ENCODE measurements at regions of chr18 and their contacts with region 1.

Region 1: DNA sequence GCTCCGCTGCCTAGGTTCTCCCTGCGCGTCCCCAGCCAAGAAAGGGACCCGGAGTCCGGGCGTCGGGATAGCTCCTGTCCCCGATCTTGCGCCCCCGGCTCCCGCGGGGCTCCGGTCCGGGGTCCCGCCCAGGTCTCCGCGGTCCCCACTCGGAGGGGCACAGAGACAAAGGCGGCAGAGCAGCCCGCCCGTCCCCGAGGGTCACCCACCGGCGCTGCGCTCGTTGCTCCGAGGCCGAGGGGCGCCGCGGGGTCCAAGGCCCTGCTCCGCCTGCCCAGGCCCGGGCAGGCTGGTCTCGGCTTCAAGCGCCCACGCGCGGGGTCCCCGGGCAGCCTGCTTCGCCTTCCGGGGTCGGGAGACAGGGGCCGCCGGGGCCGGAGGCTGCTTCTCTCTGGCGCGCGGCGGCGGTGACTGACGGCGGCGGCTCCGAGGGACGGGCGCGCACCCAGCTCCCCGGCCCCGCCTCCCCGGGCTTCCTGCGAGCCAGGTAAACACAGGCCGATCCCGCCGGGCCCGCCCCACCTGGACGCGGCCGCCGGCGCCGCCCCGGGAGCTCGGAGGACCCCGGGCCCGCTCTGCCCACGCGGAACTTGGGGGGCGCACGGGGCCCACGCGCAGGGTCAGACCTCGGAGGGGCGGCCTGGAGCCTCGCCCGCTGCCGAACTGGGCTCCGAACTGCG is at the start of gene MBP:
- DNase-seq: peak; percentile 77
- ATAC-seq: peak; percentile 52
- H3K4me3 ChIP-seq: peak within 1 kb of the TSS; percentile 34 to 90 (median 80)
- H3K4me3 Mint-ChIP-seq: peak within 1 kb of the TSS; percentile 96
- H3K27ac ChIP-seq: peak within 1 kb of the TSS; percentile 78 to 88
- H3K27ac Mint-ChIP-seq: peak within 1 kb of the TSS; percentile 93
- H3K4me1 ChIP-seq: peaks cover 45 to 54% of the 10 kb centered on the region in 2 donors
- H3K4me1 Mint-ChIP-seq: peaks cover 54% of the 10 kb centered on the region
- H3K27me3 ChIP-seq: no peaks in the 10 kb centered on the region
- H3K27me3 Mint-ChIP-seq: no peaks in the 10 kb centered on the region
- CTCF ChIP-seq: no peak
- total RNA-seq, gene MBP: 192 and 193 TPM in 2 replicates

Region 2: DNA sequence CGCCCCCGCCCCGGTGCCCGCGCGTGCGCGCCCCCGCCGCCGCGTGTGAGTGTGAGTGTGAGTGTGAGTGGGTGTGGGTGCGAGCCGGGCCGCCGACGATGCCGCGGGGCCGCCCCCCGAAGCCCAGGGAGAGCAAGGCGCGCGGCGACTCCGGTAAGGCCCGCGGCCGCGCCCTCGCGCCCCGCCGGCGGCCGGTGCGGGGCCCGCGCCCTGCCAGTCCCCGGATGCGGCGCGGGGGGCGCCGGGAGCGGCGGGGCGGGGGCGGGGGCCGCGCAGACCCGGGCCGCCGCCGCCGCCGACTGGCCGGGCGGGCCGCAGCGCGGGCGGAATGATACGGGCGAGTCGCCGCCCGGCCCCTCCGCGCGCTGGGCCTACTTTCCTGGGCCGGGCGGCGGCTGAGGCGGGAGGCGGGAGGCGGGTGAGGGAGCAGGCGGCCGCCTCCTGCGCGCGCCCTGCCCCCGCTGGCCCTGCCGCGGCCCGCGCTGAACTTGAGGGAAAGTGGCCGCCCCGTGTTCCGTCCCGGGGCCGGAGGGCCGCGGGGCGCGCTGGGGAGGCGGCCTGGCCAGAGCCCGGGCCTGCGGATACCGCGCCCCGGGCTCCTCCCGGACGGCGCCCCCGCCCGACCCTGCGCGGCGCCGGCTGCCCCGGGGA is 309.9 kb before region 1 on chr18 and contains the start of gene ZNF236:
- CTCF ChIA-PET with region 1: no interaction called
- POLR2A ChIA-PET with region 1: no interaction called
- intact Hi-C with region 1: loop called (anchors 5 kb)
- DNase-seq: peak; percentile 89
- ATAC-seq: peak; percentile 60
- H3K4me3 ChIP-seq: peak within 1 kb of the TSS; percentile 75 to 98 (median 95)
- H3K4me3 Mint-ChIP-seq: peak within 1 kb of the TSS; percentile 95
- H3K27ac ChIP-seq: peak within 1 kb of the TSS; percentile 85 to 90
- H3K27ac Mint-ChIP-seq: peak within 1 kb of the TSS; percentile 97
- H3K4me1 ChIP-seq: peaks cover 19 to 45% of the 10 kb centered on the region in 2 donors
- H3K4me1 Mint-ChIP-seq: peaks cover 60% of the 10 kb centered on the region
- H3K27me3 ChIP-seq: no peaks in the 10 kb centered on the region
- H3K27me3 Mint-ChIP-seq: no peaks in the 10 kb centered on the region
- CTCF ChIP-seq: no peak
- total RNA-seq, gene ZNF236: 39.2 and 39.5 TPM in 2 replicates

Region 3: GRCh38 chr18:76914314-76914713 is 218.2 kb before region 1 on chr18:
- CTCF ChIA-PET with region 1: no interaction called
- POLR2A ChIA-PET with region 1: no interaction called
- intact Hi-C with region 1: no loop called
- DNase-seq: no peak
- ATAC-seq: no peak
- H3K4me3 ChIP-seq: no peak overlapping the region
- H3K4me3 Mint-ChIP-seq: no peak overlapping the region
- H3K27ac ChIP-seq: no peak overlapping the region
- H3K27ac Mint-ChIP-seq: no peak overlapping the region
- H3K4me1 ChIP-seq: no peaks in the 10 kb centered on the region
- H3K4me1 Mint-ChIP-seq: peaks cover 11% of the 10 kb centered on the region
- H3K27me3 ChIP-seq: no peaks in the 10 kb centered on the region
- H3K27me3 Mint-ChIP-seq: no peaks in the 10 kb centered on the region
- CTCF ChIP-seq: no peak

Region 4: DNA sequence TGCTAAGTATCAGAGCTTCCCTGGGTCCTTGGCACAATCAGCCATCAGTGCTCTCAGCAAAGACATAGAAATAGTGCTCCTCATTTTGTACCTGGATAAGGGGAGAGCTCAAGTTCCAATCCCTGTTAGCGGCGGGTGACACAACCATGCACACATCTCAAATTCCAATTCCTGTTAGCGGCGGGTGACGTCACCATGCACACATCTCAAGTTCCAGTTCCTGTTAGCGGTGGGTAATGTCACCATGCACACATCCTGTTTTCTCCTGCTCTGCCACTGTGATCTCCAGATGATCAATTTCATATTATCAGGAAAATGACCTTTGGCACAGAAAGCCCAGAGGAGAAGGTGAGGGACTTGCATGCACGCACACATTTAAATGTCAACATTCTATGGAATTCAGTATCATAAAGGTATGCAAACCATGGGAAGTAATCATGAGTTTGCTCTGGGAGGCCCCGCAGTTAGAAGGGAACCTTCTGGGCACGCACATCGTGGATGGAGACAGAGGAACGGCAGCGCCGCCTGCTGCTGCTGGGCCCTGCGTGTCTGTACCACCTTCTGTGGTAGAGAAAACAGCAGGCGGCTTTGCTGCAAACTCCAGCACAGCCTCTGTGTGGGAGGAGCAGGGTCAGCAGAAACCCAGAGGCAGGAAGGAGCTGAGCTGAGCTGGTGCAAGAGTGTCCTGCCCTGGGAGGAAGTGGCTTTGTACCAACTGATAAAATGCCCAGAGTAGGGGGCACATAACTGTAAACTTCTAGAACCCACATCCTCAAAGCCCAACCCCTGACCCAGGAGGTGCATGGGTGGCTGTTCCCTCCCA is 77.7 kb before region 1 on chr18:
- CTCF ChIA-PET with region 1: interaction called, 16 read pairs
- POLR2A ChIA-PET with region 1: interaction called, 23 read pairs
- intact Hi-C with region 1: loop called (anchors 2 kb)
- DNase-seq: peak; percentile 91
- ATAC-seq: peak; percentile 69
- H3K4me3 ChIP-seq: peak overlapping the region; percentile 32 to 41 (median 38)
- H3K4me3 Mint-ChIP-seq: peak overlapping the region; percentile 89
- H3K27ac ChIP-seq: peak overlapping the region; percentile 92 to 96
- H3K27ac Mint-ChIP-seq: peak overlapping the region; percentile 96
- H3K4me1 ChIP-seq: peaks cover 56 to 61% of the 10 kb centered on the region in 2 donors
- H3K4me1 Mint-ChIP-seq: peaks cover 68% of the 10 kb centered on the region
- H3K27me3 ChIP-seq: no peaks in the 10 kb centered on the region
- H3K27me3 Mint-ChIP-seq: no peaks in the 10 kb centered on the region
- CTCF ChIP-seq: peak; percentile 64

Region 5: GRCh38 chr18:77079954-77080682 is 52.4 kb before region 1 on chr18:
- CTCF ChIA-PET with region 1: no interaction called
- POLR2A ChIA-PET with region 1: interaction called, 4 read pairs
- intact Hi-C with region 1: loop called (anchors 2 kb)
- DNase-seq: peak; percentile 91
- ATAC-seq: peak; percentile 98
- H3K4me3 ChIP-seq: peak overlapping the region in 1 of 5 experiments; percentile 38
- H3K4me3 Mint-ChIP-seq: peak overlapping the region; percentile 70
- H3K27ac ChIP-seq: peak overlapping the region in 1 of 2 donors; percentile 87
- H3K27ac Mint-ChIP-seq: peak overlapping the region; percentile 94
- H3K4me1 ChIP-seq: peaks cover 18 to 27% of the 10 kb centered on the region in 2 donors
- H3K4me1 Mint-ChIP-seq: peaks cover 66% of the 10 kb centered on the region
- H3K27me3 ChIP-seq: no peaks in the 10 kb centered on the region
- H3K27me3 Mint-ChIP-seq: no peaks in the 10 kb centered on the region
- CTCF ChIP-seq: no peak

Region 6: DNA sequence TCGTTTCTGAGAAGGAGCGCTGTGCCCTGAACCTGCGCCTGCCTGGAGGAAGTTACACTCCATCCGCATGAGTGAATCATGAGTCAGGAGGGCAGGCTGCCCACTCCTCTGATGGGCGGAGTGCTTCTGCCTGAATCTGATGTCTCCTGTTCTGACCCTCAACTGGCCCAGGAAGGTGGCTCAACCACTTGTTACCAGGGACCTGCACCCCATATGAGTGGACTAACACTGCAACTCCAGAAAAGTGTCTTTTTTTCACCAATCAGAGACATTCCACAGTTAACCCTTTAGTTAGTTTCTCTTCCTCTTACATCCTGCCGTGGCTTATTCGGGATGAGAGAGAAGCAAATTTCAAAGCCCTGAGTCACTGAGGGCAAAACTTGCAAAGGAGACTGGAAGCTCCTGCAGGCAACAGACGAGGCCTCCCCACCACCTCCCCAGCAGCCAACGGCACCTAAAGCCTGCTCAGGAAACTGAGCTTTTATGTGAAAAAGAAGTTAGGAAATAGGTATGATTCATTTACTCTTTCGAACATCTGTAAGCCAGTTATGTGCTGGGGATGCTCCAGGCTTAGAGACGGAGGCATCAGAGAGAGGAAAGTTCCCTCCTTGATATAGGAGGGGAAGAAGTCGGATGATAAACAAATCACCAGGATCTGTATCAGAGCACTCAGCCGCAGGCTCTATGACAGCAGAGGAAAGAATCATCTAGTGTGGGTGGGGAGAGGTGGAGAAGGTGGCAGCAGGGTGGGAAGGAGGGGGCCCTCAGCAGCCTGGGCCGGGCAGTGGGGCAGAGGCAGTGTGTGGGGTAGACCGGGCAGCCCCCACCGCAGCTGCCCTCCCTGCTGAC is 30.9 kb before region 1 on chr18:
- CTCF ChIA-PET with region 1: interaction called, 5 read pairs
- POLR2A ChIA-PET with region 1: interaction called, 6 read pairs
- intact Hi-C with region 1: loop called (anchors 5 kb)
- DNase-seq: peak; percentile 63
- ATAC-seq: peak; percentile 69
- H3K4me3 ChIP-seq: peak overlapping the region in 3 of 5 experiments; percentile 12 to 42 (median 25)
- H3K4me3 Mint-ChIP-seq: peak overlapping the region; percentile 84
- H3K27ac ChIP-seq: peak overlapping the region; percentile 43 to 58
- H3K27ac Mint-ChIP-seq: peak overlapping the region; percentile 89
- H3K4me1 ChIP-seq: peaks cover 65 to 78% of the 10 kb centered on the region in 2 donors
- H3K4me1 Mint-ChIP-seq: peaks cover 85% of the 10 kb centered on the region
- H3K27me3 ChIP-seq: no peaks in the 10 kb centered on the region
- H3K27me3 Mint-ChIP-seq: no peaks in the 10 kb centered on the region
- CTCF ChIP-seq: no peak

Region 7: GRCh38 chr18:77147418-77147852 is 14.9 kb after region 1 on chr18:
- CTCF ChIA-PET with region 1: interaction called, 5 read pairs
- POLR2A ChIA-PET with region 1: no interaction called
- intact Hi-C with region 1: loop called (anchors 2 kb)
- DNase-seq: peak; percentile 65
- ATAC-seq: peak; percentile 62
- H3K4me3 ChIP-seq: no peak overlapping the region
- H3K4me3 Mint-ChIP-seq: peak overlapping the region; percentile 76
- H3K27ac ChIP-seq: peak overlapping the region; percentile 17 to 73
- H3K27ac Mint-ChIP-seq: peak overlapping the region; percentile 88
- H3K4me1 ChIP-seq: peaks cover 24 to 35% of the 10 kb centered on the region in 2 donors
- H3K4me1 Mint-ChIP-seq: peaks cover 36% of the 10 kb centered on the region
- H3K27me3 ChIP-seq: no peaks in the 10 kb centered on the region
- H3K27me3 Mint-ChIP-seq: no peaks in the 10 kb centered on the region
- CTCF ChIP-seq: no peak

Region 8: DNA sequence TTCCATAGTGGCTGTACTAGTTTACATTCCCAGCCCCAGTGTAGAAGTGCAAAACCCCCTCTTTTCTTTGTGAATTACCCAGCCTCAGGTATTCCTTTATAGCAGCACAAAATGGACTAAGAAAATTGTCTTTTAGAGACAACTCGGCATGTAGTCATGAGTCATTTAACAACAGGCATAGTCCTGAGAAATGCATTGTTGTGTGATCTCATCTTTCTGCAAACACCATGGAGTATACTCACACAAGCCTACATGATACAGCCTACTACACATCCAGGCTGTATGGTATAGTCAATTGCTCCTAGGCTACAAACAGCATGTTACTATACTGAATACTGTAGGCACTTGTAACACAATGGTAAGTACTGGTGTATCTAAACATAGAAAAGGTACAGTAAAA is 44.5 kb after region 1 on chr18:
- CTCF ChIA-PET with region 1: no interaction called
- POLR2A ChIA-PET with region 1: no interaction called
- intact Hi-C with region 1: no loop called
- DNase-seq: no peak
- ATAC-seq: no peak
- H3K4me3 ChIP-seq: no peak overlapping the region
- H3K4me3 Mint-ChIP-seq: no peak overlapping the region
- H3K27ac ChIP-seq: no peak overlapping the region
- H3K27ac Mint-ChIP-seq: no peak overlapping the region
- H3K4me1 ChIP-seq: no peaks in the 10 kb centered on the region
- H3K4me1 Mint-ChIP-seq: no peaks in the 10 kb centered on the region
- H3K27me3 ChIP-seq: no peaks in the 10 kb centered on the region
- H3K27me3 Mint-ChIP-seq: no peaks in the 10 kb centered on the region
- CTCF ChIP-seq: no peak

Region 9: GRCh38 chr18:77207540-77207939 is 75.0 kb after region 1 on chr18:
- CTCF ChIA-PET with region 1: interaction called, 12 read pairs
- POLR2A ChIA-PET with region 1: no interaction called
- intact Hi-C with region 1: loop called (anchors 2 kb)
- DNase-seq: peak; percentile 65
- ATAC-seq: peak; percentile 65
- H3K4me3 ChIP-seq: no peak overlapping the region
- H3K4me3 Mint-ChIP-seq: peak overlapping the region; percentile 70
- H3K27ac ChIP-seq: no peak overlapping the region
- H3K27ac Mint-ChIP-seq: peak overlapping the region; percentile 65
- H3K4me1 ChIP-seq: peaks cover 4 to 28% of the 10 kb centered on the region in 2 donors
- H3K4me1 Mint-ChIP-seq: peaks cover 30% of the 10 kb centered on the region
- H3K27me3 ChIP-seq: peaks cover 0 to 7% (median 0%) of the 10 kb centered on the region in 4 experiments
- H3K27me3 Mint-ChIP-seq: peaks cover 4% of the 10 kb centered on the region
- CTCF ChIP-seq: peak; percentile 70

Region 10: DNA sequence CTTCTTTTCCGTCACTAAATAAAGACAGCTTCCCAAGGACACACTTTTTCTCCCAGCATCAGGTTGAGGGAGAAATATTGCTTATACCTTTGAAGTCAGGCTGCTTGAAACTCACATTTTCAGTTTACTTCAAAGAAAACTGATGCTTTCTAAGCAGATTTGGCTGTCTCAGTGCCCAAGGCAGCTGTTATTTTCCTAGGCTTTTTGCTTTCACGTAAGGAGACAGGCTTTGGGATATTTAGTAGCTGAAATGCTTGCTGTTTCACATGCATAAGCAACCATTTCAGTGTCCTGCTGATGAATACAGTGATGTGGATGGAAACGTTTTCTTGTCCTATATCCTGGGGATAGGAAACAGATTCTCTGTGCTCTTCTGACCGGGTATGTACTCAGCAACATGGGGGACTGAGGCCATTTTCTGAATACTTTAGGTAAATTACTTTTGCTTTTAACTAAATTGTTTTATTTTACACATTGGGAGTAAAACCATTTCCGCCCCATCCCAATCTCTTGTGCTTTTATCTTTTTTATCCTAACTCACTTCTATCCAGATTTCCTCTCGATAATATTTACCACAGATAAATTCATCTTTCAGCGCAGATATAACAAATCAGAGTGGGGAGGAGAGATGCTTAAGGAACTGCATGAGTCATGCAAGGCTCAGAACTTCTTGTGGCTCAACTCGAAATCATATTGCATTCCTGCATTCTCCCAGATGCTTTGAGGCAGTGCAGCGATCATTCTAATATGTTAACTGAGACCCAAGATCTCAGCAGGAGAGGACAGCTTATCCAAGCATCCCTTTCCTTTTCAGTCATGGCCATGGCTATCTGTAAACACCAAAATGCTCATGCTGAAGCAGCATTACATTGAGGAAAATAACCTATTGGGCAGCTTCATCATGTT is 139.3 kb after region 1 on chr18:
- CTCF ChIA-PET with region 1: no interaction called
- POLR2A ChIA-PET with region 1: no interaction called
- intact Hi-C with region 1: no loop called
- DNase-seq: no peak
- ATAC-seq: no peak
- H3K4me3 ChIP-seq: no peak overlapping the region
- H3K4me3 Mint-ChIP-seq: no peak overlapping the region
- H3K27ac ChIP-seq: no peak overlapping the region
- H3K27ac Mint-ChIP-seq: no peak overlapping the region
- H3K4me1 ChIP-seq: no peaks in the 10 kb centered on the region
- H3K4me1 Mint-ChIP-seq: no peaks in the 10 kb centered on the region
- H3K27me3 ChIP-seq: peaks cover 0 to 3% (median 1%) of the 10 kb centered on the region in 4 experiments
- H3K27me3 Mint-ChIP-seq: peaks cover 42% of the 10 kb centered on the region
- CTCF ChIP-seq: no peak